Activated CD4-positive, alpha-beta memory T cell treated with anti-CD3 and anti-CD28 coated beads, Interleukin-2, amount 10 ng/mL, durations not matched to agents 7 days and 5 days (primary cell): ENCODE measurements at regions of chr19 and their contacts with region 1.

Region 1: GRCh38 chr19:49850473-49851342 is at the start of gene PTOV1:
- DNase-seq: peak; percentile 90
- H3K4me3 Mint-ChIP-seq: peak within 1 kb of the TSS; percentile 86
- H3K27ac Mint-ChIP-seq: peak within 1 kb of the TSS; percentile 95
- H3K4me1 Mint-ChIP-seq: peaks cover 41% of the 10 kb centered on the region
- H3K27me3 Mint-ChIP-seq: peaks cover 18% of the 10 kb centered on the region
- total RNA-seq, gene PTOV1: 69.3 to 71.7 TPM

Region 2: GRCh38 chr19:49727217-49728030 is 123.3 kb before region 1 on chr19:
- CTCF ChIA-PET with region 1: no interaction called
- POLR2A ChIA-PET with region 1: no interaction called
- DNase-seq: no peak
- H3K4me3 Mint-ChIP-seq: no peak overlapping the region
- H3K27ac Mint-ChIP-seq: no peak overlapping the region
- H3K4me1 Mint-ChIP-seq: no peaks in the 10 kb centered on the region
- H3K27me3 Mint-ChIP-seq: no peaks in the 10 kb centered on the region

Region 3: GRCh38 chr19:49817964-49818648 is 32.6 kb before region 1 on chr19 and contains the start of gene MED25:
- CTCF ChIA-PET with region 1: interaction called, 4 read pairs
- POLR2A ChIA-PET with region 1: interaction called, 22 read pairs
- DNase-seq: peak; percentile 89
- H3K4me3 Mint-ChIP-seq: peak within 1 kb of the TSS; percentile 86
- H3K27ac Mint-ChIP-seq: peak within 1 kb of the TSS; percentile 93
- H3K4me1 Mint-ChIP-seq: peaks cover 36% of the 10 kb centered on the region
- H3K27me3 Mint-ChIP-seq: no peaks in the 10 kb centered on the region
- total RNA-seq, gene MED25: 65.3 to 67.9 TPM

Region 4: DNA sequence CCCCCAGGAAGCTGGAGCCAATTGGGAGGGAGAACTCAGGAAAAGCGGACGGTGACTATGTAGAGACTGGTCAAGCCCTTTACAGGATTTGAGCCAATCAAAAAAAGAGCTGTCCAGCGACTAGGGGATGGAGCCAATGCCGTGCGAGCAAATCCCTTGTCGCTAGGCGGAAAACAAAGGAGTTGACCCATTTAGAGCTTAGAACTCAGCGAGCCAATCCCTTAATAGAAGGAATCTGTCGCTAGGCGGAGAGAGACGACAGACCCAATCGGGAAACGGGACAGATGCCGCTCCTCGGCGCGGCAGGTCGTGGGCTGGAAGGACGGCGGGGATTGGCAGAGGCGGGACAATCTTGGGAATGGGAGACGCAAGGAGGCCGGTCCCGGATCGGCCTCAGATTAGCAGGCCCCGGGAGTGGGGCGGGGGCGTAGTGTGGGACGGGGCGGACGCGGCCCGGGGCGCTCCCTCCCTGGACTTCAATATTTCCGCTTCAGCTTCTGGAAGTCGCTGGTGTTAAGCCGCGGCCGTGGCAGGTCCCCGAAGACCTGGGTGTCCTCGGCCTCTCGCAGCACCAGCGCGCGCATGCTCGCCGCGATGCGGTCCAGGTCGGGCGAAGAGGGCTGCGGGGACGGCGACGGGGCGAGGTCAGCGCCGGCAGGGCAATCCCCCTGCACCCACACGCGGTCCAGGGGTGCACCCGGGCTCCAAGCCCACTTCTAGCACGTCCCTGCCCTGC is 18.9 kb after region 1 on chr19:
- CTCF ChIA-PET with region 1: interaction called, 5 read pairs
- POLR2A ChIA-PET with region 1: interaction called, 48 read pairs
- DNase-seq: peak; percentile 94
- H3K4me3 Mint-ChIP-seq: no peak overlapping the region
- H3K27ac Mint-ChIP-seq: no peak overlapping the region
- H3K4me1 Mint-ChIP-seq: peaks cover 46% of the 10 kb centered on the region
- H3K27me3 Mint-ChIP-seq: no peaks in the 10 kb centered on the region

Region 5: GRCh38 chr19:49877020-49877878 is 26.5 kb after region 1 on chr19 and contains the starts of genes AKT1S1 and TBC1D17:
- CTCF ChIA-PET with region 1: no interaction called
- POLR2A ChIA-PET with region 1: interaction called, 10 read pairs
- DNase-seq: peak; percentile 99
- H3K4me3 Mint-ChIP-seq: no peak within 1 kb of the TSS
- H3K27ac Mint-ChIP-seq: no peak within 1 kb of the TSS
- H3K4me1 Mint-ChIP-seq: peaks cover 32% of the 10 kb centered on the region
- H3K27me3 Mint-ChIP-seq: no peaks in the 10 kb centered on the region
- total RNA-seq, gene AKT1S1: 20.2 to 23.0 TPM
- total RNA-seq, gene TBC1D17: 42.3 to 47.6 TPM

Region 6: GRCh38 chr19:49896863-49897621 is 46.3 kb after region 1 on chr19 and contains the start of gene IL4I1:
- CTCF ChIA-PET with region 1: no interaction called
- POLR2A ChIA-PET with region 1: no interaction called
- DNase-seq: peak; percentile 76
- H3K4me3 Mint-ChIP-seq: peak within 1 kb of the TSS; percentile 80
- H3K27ac Mint-ChIP-seq: peak within 1 kb of the TSS; percentile 97
- H3K4me1 Mint-ChIP-seq: peaks cover 52% of the 10 kb centered on the region
- H3K27me3 Mint-ChIP-seq: no peaks in the 10 kb centered on the region
- total RNA-seq, gene IL4I1: 25.7 to 26.4 TPM

Region 7: GRCh38 chr19:49920624-49921363 is 70.1 kb after region 1 on chr19:
- CTCF ChIA-PET with region 1: no interaction called
- POLR2A ChIA-PET with region 1: no interaction called
- DNase-seq: no peak
- H3K4me3 Mint-ChIP-seq: no peak overlapping the region
- H3K27ac Mint-ChIP-seq: peak overlapping the region; percentile 52
- H3K4me1 Mint-ChIP-seq: peaks cover 51% of the 10 kb centered on the region
- H3K27me3 Mint-ChIP-seq: no peaks in the 10 kb centered on the region